CD8-positive, alpha-beta T cell (primary cell): ENCODE measurements at regions of chr16 and their contacts with region 1.

Region 1: DNA sequence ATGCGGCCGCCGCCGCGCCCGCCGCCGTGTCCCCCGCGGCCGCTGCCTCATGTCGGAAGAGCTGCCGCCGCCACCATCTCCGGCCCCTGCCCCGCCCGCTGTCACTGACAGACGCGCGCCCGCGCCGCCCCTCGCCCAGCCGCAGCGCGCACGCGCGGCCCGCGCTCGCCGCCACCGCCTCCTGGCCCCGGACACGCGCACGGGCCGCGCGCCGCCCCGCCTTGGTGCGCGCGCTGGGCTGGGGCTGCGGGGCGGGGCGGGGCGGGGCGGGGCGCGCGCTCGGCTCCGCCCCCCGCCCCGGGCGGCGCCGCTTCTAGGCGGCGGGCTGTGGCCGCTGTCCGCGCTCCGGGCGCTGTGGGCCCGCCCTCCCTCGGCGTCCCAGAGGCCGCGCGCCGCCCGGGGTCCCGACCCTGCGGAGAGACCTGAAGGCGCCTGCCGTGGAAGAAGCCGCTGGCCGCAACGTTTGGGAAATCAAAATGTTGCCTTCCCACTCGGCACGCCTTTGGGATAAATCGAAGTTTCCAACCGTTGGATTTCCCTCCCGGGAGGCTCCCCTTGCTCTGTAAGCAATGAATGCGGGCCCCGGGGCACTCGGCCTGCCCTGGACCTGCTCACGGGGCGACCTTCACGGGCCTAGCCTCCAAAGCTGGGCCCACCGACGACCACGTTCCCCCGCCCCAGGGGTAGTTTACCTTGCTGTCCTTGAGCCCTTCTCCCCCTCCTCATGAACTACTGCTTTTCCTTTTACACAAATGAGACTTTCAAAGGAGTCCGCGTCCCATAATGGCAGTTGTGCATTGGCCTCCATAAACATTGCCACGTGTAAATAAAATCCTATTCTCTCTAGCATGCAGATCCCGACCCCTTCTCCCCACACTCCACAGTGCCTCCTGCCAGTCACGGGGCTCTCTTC is at the start of gene ADCY9:
- DNase-seq: peak; percentile 31 to 92 (median 74)
- ATAC-seq: peak; percentile 77
- H3K4me3 ChIP-seq: peak within 1 kb of the TSS; percentile 55 to 64
- H3K4me3 Mint-ChIP-seq: peak within 1 kb of the TSS; percentile 87
- H3K27ac ChIP-seq: peak within 1 kb of the TSS in 1 of 2 experiments; percentile 39
- H3K27ac Mint-ChIP-seq: peak within 1 kb of the TSS; percentile 52
- H3K4me1 ChIP-seq: peaks cover 33% of the 10 kb centered on the region
- H3K4me1 Mint-ChIP-seq: peaks cover 40% of the 10 kb centered on the region
- H3K27me3 ChIP-seq: no peaks in the 10 kb centered on the region
- H3K27me3 Mint-ChIP-seq: peaks cover 3% of the 10 kb centered on the region
- CTCF ChIP-seq: no peak
- total RNA-seq, gene ADCY9: 4.2 to 4.3 TPM

Region 2: DNA sequence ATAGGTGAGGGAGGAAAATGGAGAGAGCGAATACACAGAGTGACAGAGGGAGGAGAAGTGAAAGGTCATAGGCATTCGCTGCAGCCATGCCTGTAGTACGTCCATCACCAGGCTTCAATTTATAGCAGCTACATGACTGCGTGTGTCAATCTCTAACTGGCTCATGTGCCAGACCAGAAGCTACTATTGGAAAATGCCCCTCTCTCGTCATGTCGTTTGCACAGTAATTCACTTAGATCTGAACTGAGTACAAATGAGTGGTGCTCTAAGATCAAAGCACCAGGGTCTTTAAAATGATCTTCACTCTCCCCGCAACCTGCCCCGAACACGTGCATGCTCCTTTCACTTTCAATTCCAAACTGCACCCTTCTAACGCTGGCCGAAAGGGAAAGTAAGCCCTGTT is 51.6 kb before region 1 on chr16:
- CTCF ChIA-PET with region 1: no interaction called
- POLR2A ChIA-PET with region 1: no interaction called
- intact Hi-C with region 1: no loop called
- DNase-seq: peak in 8 of 9 experiments; percentile 9 to 78 (median 37)
- ATAC-seq: peak; percentile 91
- H3K4me3 ChIP-seq: peak overlapping the region; percentile 56 to 57
- H3K4me3 Mint-ChIP-seq: peak overlapping the region; percentile 84
- H3K27ac ChIP-seq: peak overlapping the region; percentile 64 to 72
- H3K27ac Mint-ChIP-seq: peak overlapping the region; percentile 88
- H3K4me1 ChIP-seq: peaks cover 13% of the 10 kb centered on the region
- H3K4me1 Mint-ChIP-seq: peaks cover 14% of the 10 kb centered on the region
- H3K27me3 ChIP-seq: no peaks in the 10 kb centered on the region
- H3K27me3 Mint-ChIP-seq: no peaks in the 10 kb centered on the region
- CTCF ChIP-seq: no peak

Region 3: DNA sequence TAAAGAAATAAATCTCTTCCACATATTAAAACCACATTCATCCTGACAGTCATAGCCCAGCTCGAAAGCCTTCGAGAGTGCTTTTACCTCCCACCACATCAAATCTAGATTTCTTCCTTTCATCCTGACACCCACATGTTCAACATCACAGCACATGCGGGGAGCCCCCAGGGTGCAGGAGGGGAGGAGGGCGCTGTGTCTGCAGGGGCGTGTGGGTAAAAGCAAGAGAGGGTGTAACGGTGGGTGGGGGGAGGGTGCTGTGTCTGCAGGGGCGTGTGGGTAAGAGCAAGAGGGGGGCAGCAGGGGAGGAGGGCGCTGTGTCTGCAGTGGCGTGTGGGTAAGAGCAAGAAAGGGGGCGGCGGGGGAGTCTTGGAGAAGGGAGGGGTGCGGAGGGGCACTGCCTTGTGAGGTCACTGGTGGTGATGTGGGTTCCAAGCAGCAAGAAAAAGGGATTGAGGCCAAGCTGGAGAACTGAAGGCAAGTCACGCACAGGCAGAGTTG is 35.0 kb before region 1 on chr16:
- CTCF ChIA-PET with region 1: no interaction called
- POLR2A ChIA-PET with region 1: no interaction called
- intact Hi-C with region 1: loop called in 1 of 2 experiments (anchors 1 kb)
- DNase-seq: peak; percentile 6 to 85 (median 55)
- ATAC-seq: peak; percentile 95
- H3K4me3 ChIP-seq: peak overlapping the region in 1 of 2 experiments; percentile 18
- H3K4me3 Mint-ChIP-seq: peak overlapping the region; percentile 46
- H3K27ac ChIP-seq: no peak overlapping the region
- H3K27ac Mint-ChIP-seq: no peak overlapping the region
- H3K4me1 ChIP-seq: peaks cover 27% of the 10 kb centered on the region
- H3K4me1 Mint-ChIP-seq: peaks cover 34% of the 10 kb centered on the region
- H3K27me3 ChIP-seq: no peaks in the 10 kb centered on the region
- H3K27me3 Mint-ChIP-seq: no peaks in the 10 kb centered on the region
- CTCF ChIP-seq: no peak

Region 4: DNA sequence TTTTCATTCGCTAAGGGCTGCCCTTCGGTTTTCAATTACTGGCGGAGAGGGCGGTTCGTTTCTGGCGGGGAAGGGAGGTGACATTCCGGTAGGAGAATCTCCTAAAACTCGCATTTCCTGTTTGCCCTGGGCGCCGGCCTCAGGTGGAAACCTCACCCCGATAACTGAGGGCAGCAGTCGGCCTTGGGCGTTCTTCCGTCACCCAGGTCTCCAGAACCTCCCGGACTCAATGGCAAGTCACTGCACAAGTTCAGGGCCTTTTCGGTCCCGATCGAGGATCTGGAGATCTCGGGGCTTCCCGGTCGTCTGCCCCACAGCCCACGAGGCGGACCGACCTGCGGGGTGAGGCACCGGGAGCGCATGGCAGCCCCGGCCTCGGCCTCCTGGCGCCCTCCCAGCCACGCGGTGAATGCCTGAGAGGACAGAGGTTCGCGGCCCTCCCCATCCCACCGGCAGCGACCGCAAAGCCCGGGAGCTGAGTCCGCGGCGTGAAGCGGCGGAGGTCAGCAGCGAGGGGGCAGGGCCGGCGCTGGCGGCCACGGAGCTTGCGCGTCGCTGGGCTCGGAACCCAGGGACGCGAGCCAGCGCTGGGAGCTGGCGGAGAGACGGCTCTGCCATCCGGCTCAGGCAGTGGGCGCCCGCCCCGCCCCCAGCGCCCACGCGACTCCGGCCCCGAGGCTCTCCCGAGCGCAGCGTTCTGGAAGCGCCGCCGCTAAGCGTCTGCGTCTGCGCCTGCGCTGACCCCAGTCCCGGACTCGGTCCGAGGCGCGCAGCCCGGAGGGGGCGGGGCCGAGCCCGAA is 66.8 kb after region 1 on chr16:
- CTCF ChIA-PET with region 1: no interaction called
- POLR2A ChIA-PET with region 1: no interaction called
- intact Hi-C with region 1: loop called in 1 of 2 experiments (anchors 5 kb)
- DNase-seq: peak; percentile 58 to 92 (median 83)
- ATAC-seq: peak; percentile 87
- H3K4me3 ChIP-seq: peak overlapping the region; percentile 67 to 79
- H3K4me3 Mint-ChIP-seq: peak overlapping the region; percentile 76
- H3K27ac ChIP-seq: peak overlapping the region; percentile 31 to 48
- H3K27ac Mint-ChIP-seq: no peak overlapping the region
- H3K4me1 ChIP-seq: peaks cover 11% of the 10 kb centered on the region
- H3K4me1 Mint-ChIP-seq: peaks cover 6% of the 10 kb centered on the region
- H3K27me3 ChIP-seq: peaks cover 0 to 2% of the 10 kb centered on the region in 2 experiments
- H3K27me3 Mint-ChIP-seq: no peaks in the 10 kb centered on the region
- CTCF ChIP-seq: no peak